Activated CD8-positive, alpha-beta T cell treated with anti-CD3 and anti-CD28 coated beads for 36 hours (primary cell): ENCODE measurements at regions of chr17 and their contacts with region 1.

Region 1: GRCh38 chr17:1628856-1629646 is 417 bp upstream of the SLC43A2 start:
- DNase-seq: peak; percentile 96
- ATAC-seq: peak; percentile 78
- H3K4me3 Mint-ChIP-seq: peak overlapping the region; percentile 88
- H3K27ac Mint-ChIP-seq: peak overlapping the region; percentile 90
- H3K4me1 Mint-ChIP-seq: peaks cover 11% of the 10 kb centered on the region
- H3K27me3 Mint-ChIP-seq: peaks cover 8% of the 10 kb centered on the region
- CTCF ChIP-seq: no peak

Region 2: DNA sequence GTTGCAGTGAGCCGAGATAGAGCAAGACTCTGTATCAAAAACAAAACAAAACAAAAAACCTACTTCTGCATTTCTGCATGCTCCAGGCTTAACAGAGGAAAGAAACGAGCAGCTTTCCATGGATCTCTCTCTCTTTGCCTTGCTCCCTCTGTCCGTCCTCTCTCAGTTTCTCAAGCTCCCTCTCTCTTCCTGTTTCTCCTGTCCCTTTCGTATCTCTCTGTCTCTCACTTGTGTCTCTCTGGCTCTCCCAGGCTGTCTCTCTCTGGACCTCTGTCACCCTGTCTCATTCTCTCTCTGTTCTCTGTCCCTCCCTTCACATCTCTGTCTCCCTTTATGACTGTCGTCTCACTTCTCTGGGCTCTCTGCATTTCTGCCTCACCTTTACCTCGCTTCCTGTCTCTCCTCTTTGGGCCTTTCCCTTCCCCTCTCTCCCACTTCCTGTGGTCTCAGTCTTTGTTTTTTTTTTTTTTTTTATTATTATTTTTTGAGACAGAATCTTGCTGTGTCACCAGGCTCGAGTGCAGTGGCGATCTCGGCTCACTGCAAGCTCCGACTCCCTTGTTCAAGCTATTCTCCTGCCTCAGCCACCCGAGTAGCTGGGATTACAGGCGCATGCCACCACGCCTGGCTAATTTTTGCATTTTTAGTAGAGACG is 62.4 kb before region 1 on chr17:
- CTCF ChIA-PET with region 1: interaction called, 243 read pairs
- POLR2A ChIA-PET with region 1: interaction called, 3 read pairs
- intact Hi-C with region 1: no loop called
- DNase-seq: peak; percentile 62
- ATAC-seq: peak; percentile 75
- H3K4me3 Mint-ChIP-seq: peak overlapping the region; percentile 50
- H3K27ac Mint-ChIP-seq: peak overlapping the region; percentile 87
- H3K4me1 Mint-ChIP-seq: peaks cover 18% of the 10 kb centered on the region
- H3K27me3 Mint-ChIP-seq: no peaks in the 10 kb centered on the region
- CTCF ChIP-seq: no peak

Region 3: DNA sequence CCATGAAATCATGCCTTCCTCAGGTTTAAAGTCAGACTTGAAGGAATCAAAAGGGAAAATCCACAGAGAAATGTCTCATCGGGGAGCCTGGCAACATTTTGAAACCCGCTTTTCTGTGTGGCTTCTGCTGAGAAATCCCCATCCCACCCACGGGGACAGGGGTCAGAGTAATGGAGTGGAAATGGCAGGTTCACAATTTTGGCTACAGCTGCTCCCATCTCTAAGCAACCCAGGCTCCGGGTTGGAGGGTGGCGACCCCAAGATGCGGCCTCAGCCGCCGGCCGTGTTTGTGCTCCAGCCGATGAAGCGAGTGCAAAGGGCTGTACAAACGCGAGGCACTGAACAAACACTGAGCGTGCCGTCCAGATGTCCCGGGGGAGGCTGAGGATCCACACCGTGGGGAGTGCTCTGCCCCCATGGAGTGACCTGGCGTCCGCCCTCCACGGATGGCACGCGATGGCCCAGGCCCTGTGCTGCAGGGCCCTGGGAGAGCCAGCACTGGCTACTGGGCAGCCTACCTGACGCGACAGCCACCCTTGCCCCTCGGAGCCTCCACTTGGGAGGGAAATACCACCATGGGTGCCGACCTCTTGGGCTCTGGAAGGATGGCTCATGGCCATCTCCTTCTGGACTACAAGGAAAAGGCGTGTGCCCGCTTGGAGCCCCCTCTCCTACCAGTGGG is 22.6 kb before region 1 on chr17:
- CTCF ChIA-PET with region 1: interaction called, 12 read pairs
- POLR2A ChIA-PET with region 1: interaction called, 9 read pairs
- intact Hi-C with region 1: no loop called
- DNase-seq: peak; percentile 73
- ATAC-seq: no peak
- H3K4me3 Mint-ChIP-seq: no peak overlapping the region
- H3K27ac Mint-ChIP-seq: peak overlapping the region; percentile 93
- H3K4me1 Mint-ChIP-seq: peaks cover 32% of the 10 kb centered on the region
- H3K27me3 Mint-ChIP-seq: no peaks in the 10 kb centered on the region
- CTCF ChIP-seq: no peak

Region 4: GRCh38 chr17:1639549-1640343 is 10.7 kb after region 1 on chr17:
- CTCF ChIA-PET with region 1: interaction called, 32 read pairs
- POLR2A ChIA-PET with region 1: no interaction called
- intact Hi-C with region 1: no loop called
- DNase-seq: no peak
- ATAC-seq: no peak
- H3K4me3 Mint-ChIP-seq: no peak overlapping the region
- H3K27ac Mint-ChIP-seq: no peak overlapping the region
- H3K4me1 Mint-ChIP-seq: peaks cover 9% of the 10 kb centered on the region
- H3K27me3 Mint-ChIP-seq: no peaks in the 10 kb centered on the region
- CTCF ChIP-seq: no peak